ENCODE measurements at regions of chr2 and their contacts with region 1.

Region 1: GRCh38 chr2:101518578-101519492 is 43.9 kb upstream of the RFX8 start:
- DNase-seq: peak; percentile 65
- H3K4me3 ChIP-seq: peak overlapping the region in 1 of 3 experiments; percentile 5
- H3K27ac ChIP-seq: peak overlapping the region; percentile 95
- H3K4me1 ChIP-seq: peaks cover 68% of the 10 kb centered on the region
- H3K27me3 ChIP-seq: no peaks in the 10 kb centered on the region
- CTCF ChIP-seq: peak; percentile 33 to 75

Region 2: GRCh38 chr2:101435001-101435862 is 83.6 kb before region 1 on chr2:
- CTCF ChIA-PET with region 1: no interaction called
- dilution Hi-C with region 1: no loop called
- in situ Hi-C with region 1: loop called in 1 of 2 experiments (anchors 5 kb)
- intact Hi-C with region 1: loop called (anchors 5 kb)
- DNase-seq: no peak
- H3K4me3 ChIP-seq: no peak overlapping the region
- H3K27ac ChIP-seq: no peak overlapping the region
- H3K4me1 ChIP-seq: peaks cover 19% of the 10 kb centered on the region
- H3K27me3 ChIP-seq: no peaks in the 10 kb centered on the region
- CTCF ChIP-seq: no peak

Region 3: DNA sequence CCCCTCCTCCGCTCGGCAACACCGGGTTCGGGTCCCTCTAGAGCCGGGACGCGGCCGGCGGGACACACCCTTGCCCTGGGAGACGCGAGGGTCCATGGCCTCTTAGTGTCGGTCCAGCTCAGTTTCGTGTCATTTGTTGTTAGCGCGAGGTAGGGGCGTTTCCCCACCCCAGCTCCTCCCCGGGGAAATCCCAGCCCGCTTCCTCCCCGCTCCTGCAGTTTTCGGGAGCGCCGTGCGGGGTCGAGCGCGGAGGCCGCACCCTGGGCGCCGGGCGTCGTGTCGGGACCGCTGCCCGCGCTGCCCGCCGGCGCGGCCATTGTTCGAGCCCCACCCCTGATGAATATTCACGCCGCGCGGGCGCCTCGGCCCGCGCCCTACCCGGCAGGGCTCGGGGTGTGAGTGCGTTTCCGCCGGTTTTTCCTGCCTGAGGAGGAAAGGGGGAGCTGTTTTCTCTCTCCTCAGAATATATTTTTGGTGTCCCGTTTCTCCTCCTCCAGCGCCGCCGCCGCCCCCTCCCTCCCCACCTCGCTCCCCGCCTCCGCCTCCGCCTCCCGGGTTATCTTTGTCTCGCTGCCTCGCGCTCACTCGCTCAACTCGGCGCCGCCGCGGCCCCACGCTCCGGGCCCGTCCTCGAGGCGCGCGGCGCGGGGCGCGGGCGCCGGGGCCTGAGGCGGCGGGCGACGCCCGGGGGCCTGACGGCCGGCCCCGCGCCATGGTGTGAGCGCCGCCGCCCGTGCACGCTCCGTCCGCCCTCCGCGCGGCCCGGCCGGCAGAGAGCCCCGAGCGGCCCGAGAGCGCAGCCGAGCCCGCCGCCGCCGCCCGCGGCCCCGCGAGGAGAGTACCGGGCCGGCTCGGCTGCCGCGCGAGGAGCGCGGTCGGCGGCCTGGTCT is 178.5 kb after region 1 on chr2 and contains the start of gene MAP4K4:
- CTCF ChIA-PET with region 1: no interaction called
- dilution Hi-C with region 1: no loop called
- in situ Hi-C with region 1: loop called in 1 of 2 experiments (anchors 5 kb)
- intact Hi-C with region 1: loop called (anchors 1 kb)
- DNase-seq: peak; percentile 83
- H3K4me3 ChIP-seq: peak within 1 kb of the TSS; percentile 60 to 85 (median 67)
- H3K27ac ChIP-seq: peak within 1 kb of the TSS; percentile 76
- H3K4me1 ChIP-seq: peaks cover 15% of the 10 kb centered on the region
- H3K27me3 ChIP-seq: no peaks in the 10 kb centered on the region
- CTCF ChIP-seq: peak in 1 of 2 donors; percentile 34
- total RNA-seq, gene MAP4K4: 65.2 to 212 TPM

Region 4: GRCh38 chr2:101759162-101759561 is 240.3 kb after region 1 on chr2:
- CTCF ChIA-PET with region 1: no interaction called
- dilution Hi-C with region 1: no loop called
- in situ Hi-C with region 1: no loop called
- intact Hi-C with region 1: loop called (anchors 2 kb)
- DNase-seq: peak; percentile 87
- H3K4me3 ChIP-seq: no peak overlapping the region
- H3K27ac ChIP-seq: peak overlapping the region; percentile 17
- H3K4me1 ChIP-seq: peaks cover 35% of the 10 kb centered on the region
- H3K27me3 ChIP-seq: no peaks in the 10 kb centered on the region
- CTCF ChIP-seq: no peak

Region 5: DNA sequence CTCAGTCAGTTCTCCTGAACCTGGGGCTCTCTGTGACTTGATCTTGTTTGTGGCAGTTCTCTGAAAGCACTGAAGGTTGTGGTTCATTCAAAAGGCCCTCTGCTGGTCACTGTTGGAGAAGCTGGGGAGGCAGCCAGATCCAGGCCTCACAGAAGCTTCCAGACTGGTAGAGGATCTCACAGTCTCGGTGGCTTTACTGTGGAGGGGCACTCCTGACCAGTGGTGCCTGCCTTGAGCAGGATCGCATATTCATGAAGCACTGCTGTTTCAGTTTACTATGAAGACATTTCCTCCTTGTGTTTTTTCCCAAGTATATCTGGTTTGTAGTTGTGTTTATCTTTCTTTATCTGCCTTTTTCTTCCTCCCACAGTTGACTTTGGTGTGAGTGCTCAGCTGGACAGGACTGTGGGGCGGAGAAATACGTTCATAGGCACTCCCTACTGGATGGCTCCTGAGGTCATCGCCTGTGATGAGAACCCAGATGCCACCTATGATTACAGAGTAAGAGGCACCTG is 312.6 kb after region 1 on chr2:
- CTCF ChIA-PET with region 1: interaction called, 4 read pairs
- dilution Hi-C with region 1: loop called (anchors 25 kb)
- in situ Hi-C with region 1: loop called (anchors 5 to 10 kb)
- intact Hi-C with region 1: loop called (anchors 1 kb)
- DNase-seq: peak; percentile 64
- H3K4me3 ChIP-seq: no peak overlapping the region
- H3K27ac ChIP-seq: peak overlapping the region; percentile 58
- H3K4me1 ChIP-seq: peaks cover 52% of the 10 kb centered on the region
- H3K27me3 ChIP-seq: no peaks in the 10 kb centered on the region
- CTCF ChIP-seq: peak; percentile 66 to 82

Region 6: GRCh38 chr2:101983928-101984327 is 465.1 kb after region 1 on chr2:
- CTCF ChIA-PET with region 1: no interaction called
- dilution Hi-C with region 1: no loop called
- in situ Hi-C with region 1: no loop called
- intact Hi-C with region 1: loop called (anchors 5 kb)
- DNase-seq: peak; percentile 8
- H3K4me3 ChIP-seq: no peak overlapping the region
- H3K27ac ChIP-seq: no peak overlapping the region
- H3K4me1 ChIP-seq: peaks cover 73% of the 10 kb centered on the region
- H3K27me3 ChIP-seq: no peaks in the 10 kb centered on the region
- CTCF ChIP-seq: peak; percentile 39 to 69

Measured in mammary epithelial cell (primary cell).